HCT116 (cell line): ENCODE measurements at regions of chr1 and their contacts with region 1.

Region 1: DNA sequence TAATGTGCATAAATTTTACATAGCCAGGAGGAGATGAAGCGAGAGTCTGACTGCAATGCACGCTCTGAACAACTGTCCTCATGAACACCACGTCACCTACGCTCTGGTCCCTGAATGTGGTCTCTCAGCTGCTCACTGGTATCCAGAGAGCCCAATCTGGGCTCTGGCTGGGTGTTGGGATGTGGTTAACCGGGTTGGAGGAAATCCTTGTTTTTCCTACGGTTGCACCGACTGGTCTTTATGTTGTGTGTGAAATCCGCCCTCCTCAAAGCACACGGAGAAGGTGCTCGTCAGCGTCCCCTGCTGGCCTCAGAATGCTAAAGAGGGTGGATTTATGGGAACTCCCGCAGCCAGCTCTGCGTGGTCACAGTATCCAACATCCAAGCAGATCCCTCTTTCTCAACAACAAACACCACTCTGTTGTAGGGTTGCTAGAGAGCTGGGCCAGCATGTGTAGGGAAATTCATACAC is 51.8 kb upstream of the FAM89A start:
- DNase-seq: peak; percentile 48
- ATAC-seq: peak; percentile 96
- H3K4me3 ChIP-seq: no peak overlapping the region
- H3K27ac ChIP-seq: no peak overlapping the region
- H3K4me1 ChIP-seq: peaks cover 0 to 7% of the 10 kb centered on the region in 2 experiments; a peak in 1 of 4 replicates
- H3K27me3 ChIP-seq: no peaks in the 10 kb centered on the region; the same call in 1 of the 2 replicates
- CTCF ChIP-seq: peak; percentile 75 to 94 (median 92); a peak in 5 of 6 replicates
- POLR2A ChIP-seq: no peak
- RAD21 ChIP-seq: peak; percentile 74

Region 2: GRCh38 chr1:230632273-230632873 is 459.5 kb before region 1 on chr1:
- CTCF ChIA-PET with region 1: no interaction called
- POLR2A ChIA-PET with region 1: no interaction called
- RAD21 ChIA-PET with region 1: no interaction called
- intact Hi-C with region 1: loop called (anchors 5 kb)
- DNase-seq: peak; percentile 52
- ATAC-seq: peak; percentile 95
- H3K4me3 ChIP-seq: no peak overlapping the region
- H3K27ac ChIP-seq: no peak overlapping the region
- H3K4me1 ChIP-seq: no peaks in the 10 kb centered on the region
- H3K27me3 ChIP-seq: peaks cover 4% of the 10 kb centered on the region; the same call in 1 of the 2 replicates
- CTCF ChIP-seq: peak; percentile 82 to 87 (median 83)
- POLR2A ChIP-seq: no peak
- RAD21 ChIP-seq: peak; percentile 92

Region 3: GRCh38 chr1:230797942-230798418 is 293.9 kb before region 1 on chr1:
- CTCF ChIA-PET with region 1: interaction called, 3 read pairs
- POLR2A ChIA-PET with region 1: no interaction called
- RAD21 ChIA-PET with region 1: interaction called in 1 of 2 experiments, 8 read pairs
- intact Hi-C with region 1: loop called (anchors 1 kb)
- DNase-seq: peak; percentile 41
- ATAC-seq: peak; percentile 89
- H3K4me3 ChIP-seq: no peak overlapping the region
- H3K27ac ChIP-seq: no peak overlapping the region
- H3K4me1 ChIP-seq: no peaks in the 10 kb centered on the region
- H3K27me3 ChIP-seq: no peaks in the 10 kb centered on the region
- CTCF ChIP-seq: peak; percentile 59 to 93 (median 67)
- POLR2A ChIP-seq: no peak
- RAD21 ChIP-seq: peak; percentile 93

Region 4: DNA sequence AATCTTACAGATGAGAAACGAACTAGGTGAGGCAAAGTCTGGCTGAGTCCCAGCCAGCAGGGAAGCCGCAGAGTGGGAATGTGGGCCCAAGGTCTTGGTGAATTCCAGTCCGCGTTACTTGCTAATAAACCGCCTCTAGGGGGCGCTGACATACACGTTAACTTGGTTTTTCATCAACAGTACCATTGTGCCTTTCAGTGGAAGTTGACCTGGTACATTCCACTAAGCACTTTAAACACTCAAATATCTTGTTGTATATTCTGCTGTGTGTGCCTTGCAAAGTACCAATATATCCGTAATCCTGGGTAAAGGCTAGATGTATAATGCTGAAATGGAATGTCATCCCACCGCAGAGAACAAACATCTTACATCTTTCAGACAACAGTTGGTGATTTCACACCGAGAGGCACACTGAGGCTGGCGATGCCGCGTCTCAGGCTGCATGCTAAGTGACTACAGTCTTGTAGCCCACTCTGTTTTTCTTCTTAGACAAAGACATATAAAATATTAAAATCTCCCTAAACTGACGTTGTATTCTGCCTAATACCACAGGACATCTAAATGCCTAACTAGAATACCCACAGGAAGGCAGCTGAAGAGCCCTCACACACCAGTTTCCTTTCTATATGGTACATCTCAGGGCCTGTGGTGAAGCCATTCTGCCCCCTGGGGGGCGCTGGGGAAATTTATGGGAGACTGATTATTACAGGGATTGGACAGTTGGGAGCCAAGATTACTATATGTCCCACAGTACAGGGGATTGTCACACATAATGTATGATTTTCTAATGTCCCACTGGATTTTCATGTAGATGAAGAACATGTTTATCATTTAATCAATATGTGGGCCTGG is 174.4 kb before region 1 on chr1:
- CTCF ChIA-PET with region 1: no interaction called
- POLR2A ChIA-PET with region 1: no interaction called
- RAD21 ChIA-PET with region 1: no interaction called
- intact Hi-C with region 1: loop called (anchors 1 kb)
- DNase-seq: peak; percentile 62
- ATAC-seq: peak; percentile 88
- H3K4me3 ChIP-seq: no peak overlapping the region
- H3K27ac ChIP-seq: no peak overlapping the region
- H3K4me1 ChIP-seq: peaks cover 0 to 6% of the 10 kb centered on the region in 2 experiments; a peak in 1 of 4 replicates
- H3K27me3 ChIP-seq: no peaks in the 10 kb centered on the region
- CTCF ChIP-seq: peak; percentile 55 to 79 (median 71); a peak in 5 of 6 replicates
- POLR2A ChIP-seq: no peak
- RAD21 ChIP-seq: peak; percentile 67

Region 5: DNA sequence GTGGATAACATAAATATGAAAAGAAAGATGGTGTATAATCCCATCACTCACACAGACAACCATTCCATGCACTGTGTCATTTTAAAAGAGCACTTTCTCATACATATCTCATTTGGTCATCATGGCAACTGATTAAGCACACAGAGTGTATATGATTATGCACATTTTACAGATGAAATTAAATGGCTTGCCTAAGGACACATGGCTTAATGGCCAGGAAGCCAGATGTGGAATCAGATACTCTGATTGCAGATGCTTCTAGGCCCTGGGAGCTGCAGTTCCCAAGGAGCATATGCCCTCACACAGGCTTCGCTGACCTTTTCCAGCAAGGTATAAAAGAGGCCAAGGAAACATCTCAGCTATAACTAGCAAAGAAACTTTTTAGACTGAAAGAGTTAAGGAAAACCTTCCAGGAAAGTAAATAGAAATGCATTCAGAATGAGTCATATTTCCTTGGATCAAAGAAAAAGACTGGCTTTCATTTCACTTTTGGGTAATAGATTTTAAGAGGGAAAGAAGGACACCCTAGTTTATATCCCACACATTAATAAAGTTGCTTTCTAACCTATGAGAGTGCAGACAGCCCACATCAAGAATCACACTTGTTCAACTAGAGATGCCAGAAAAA is 32.2 kb before region 1 on chr1:
- CTCF ChIA-PET with region 1: no interaction called
- POLR2A ChIA-PET with region 1: no interaction called
- RAD21 ChIA-PET with region 1: no interaction called
- intact Hi-C with region 1: no loop called
- DNase-seq: no peak
- ATAC-seq: peak; percentile 46
- H3K4me3 ChIP-seq: no peak overlapping the region
- H3K27ac ChIP-seq: no peak overlapping the region
- H3K4me1 ChIP-seq: peaks cover 9 to 42% of the 10 kb centered on the region in 2 experiments; a peak in 3 of 4 replicates
- H3K27me3 ChIP-seq: no peaks in the 10 kb centered on the region
- CTCF ChIP-seq: no peak
- POLR2A ChIP-seq: no peak
- RAD21 ChIP-seq: no peak

Region 6: GRCh38 chr1:231124746-231125145 is 32.9 kb after region 1 on chr1:
- CTCF ChIA-PET with region 1: no interaction called
- POLR2A ChIA-PET with region 1: no interaction called
- RAD21 ChIA-PET with region 1: no interaction called
- intact Hi-C with region 1: no loop called
- DNase-seq: no peak
- ATAC-seq: no peak
- H3K4me3 ChIP-seq: no peak overlapping the region
- H3K27ac ChIP-seq: no peak overlapping the region
- H3K4me1 ChIP-seq: no peaks in the 10 kb centered on the region
- H3K27me3 ChIP-seq: no peaks in the 10 kb centered on the region
- CTCF ChIP-seq: no peak
- POLR2A ChIP-seq: no peak
- RAD21 ChIP-seq: no peak